ENCODE measurements at regions of chrX and their contacts with region 1.

Region 1: DNA sequence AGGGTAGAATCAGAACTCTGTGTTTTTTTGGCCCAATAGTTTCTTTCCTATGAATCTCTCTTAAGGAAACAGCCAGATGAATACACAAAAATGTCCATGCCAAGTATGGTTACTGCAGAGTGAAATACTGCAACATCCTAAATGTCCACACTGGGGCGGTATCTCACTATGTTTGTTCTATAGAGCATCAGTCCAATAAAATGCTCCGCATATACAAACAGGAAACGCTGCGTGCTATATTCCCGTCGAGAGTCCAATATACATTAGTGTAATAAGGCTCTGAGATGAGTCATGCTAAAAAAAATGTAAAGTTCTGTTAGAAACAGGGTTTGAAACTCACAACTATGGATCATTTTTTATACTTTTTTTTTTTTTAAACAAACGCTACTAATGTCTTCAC is 72.9 kb upstream of the ENOX2 start:
- H3K4me3 ChIP-seq: no peak overlapping the region
- H3K27ac ChIP-seq: no peak overlapping the region
- H3K4me1 ChIP-seq: no peaks in the 10 kb centered on the region
- CTCF ChIP-seq: peak; percentile 53; the same call in 1 of the 2 replicates

Region 2: GRCh38 chrX:130994671-130995070 is 18.7 kb after region 1 on chrX:
- CTCF ChIA-PET with region 1: interaction called, 19 read pairs
- POLR2A ChIA-PET with region 1: no interaction called
- H3K4me3 ChIP-seq: no peak overlapping the region
- H3K27ac ChIP-seq: no peak overlapping the region
- H3K4me1 ChIP-seq: no peaks in the 10 kb centered on the region
- CTCF ChIP-seq: no peak

Measured in HEK293 (cell line).